Naive thymus-derived CD4-positive, alpha-beta T cell (primary cell): ENCODE measurements at regions of chr5 and their contacts with region 1.

Region 1: GRCh38 chr5:142748568-142749249 is 21.5 kb upstream of the ARHGAP26 start:
- DNase-seq: peak in 8 of 9 donors; percentile 13 to 67 (median 54)
- ATAC-seq: peak; percentile 67
- H3K4me3 ChIP-seq: no peak overlapping the region
- H3K4me3 Mint-ChIP-seq: no peak overlapping the region
- H3K27ac ChIP-seq: no peak overlapping the region
- H3K27ac Mint-ChIP-seq: no peak overlapping the region
- H3K4me1 ChIP-seq: no peaks in the 10 kb centered on the region
- H3K4me1 Mint-ChIP-seq: peaks cover 0 to 17% (median 0%) of the 10 kb centered on the region in 7 donors
- H3K27me3 ChIP-seq: no peaks in the 10 kb centered on the region
- H3K27me3 Mint-ChIP-seq: peaks cover 0 to 14% (median 0%) of the 10 kb centered on the region in 5 donors

Region 2: DNA sequence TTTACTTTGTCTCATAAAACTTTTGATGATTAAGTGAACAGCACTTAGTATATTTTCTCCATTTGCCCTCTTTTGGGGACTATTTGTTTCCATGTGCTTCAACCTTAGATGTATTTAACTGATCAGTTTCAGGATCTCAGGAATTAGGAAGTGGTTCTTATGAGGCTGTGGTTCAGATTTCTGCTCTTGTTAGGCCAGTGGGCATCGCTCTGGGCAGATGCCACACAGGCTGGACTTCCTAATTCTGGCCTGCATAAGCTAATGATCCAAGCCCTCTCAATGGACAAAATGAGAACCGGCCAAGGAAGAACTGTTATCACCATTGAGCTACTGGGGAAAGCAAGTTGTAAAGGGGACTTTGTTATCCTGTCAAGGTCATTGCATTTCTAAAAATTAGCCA is 28.4 kb after region 1 on chr5:
- CTCF ChIA-PET with region 1: no interaction called
- POLR2A ChIA-PET with region 1: no interaction called
- intact Hi-C with region 1: no loop called
- DNase-seq: no peak
- ATAC-seq: peak; percentile 45
- H3K4me3 ChIP-seq: no peak overlapping the region
- H3K4me3 Mint-ChIP-seq: peak overlapping the region in 1 of 10 donors; percentile 18
- H3K27ac ChIP-seq: no peak overlapping the region
- H3K27ac Mint-ChIP-seq: no peak overlapping the region
- H3K4me1 ChIP-seq: peaks cover 15 to 38% of the 10 kb centered on the region in 2 donors
- H3K4me1 Mint-ChIP-seq: peaks cover 37 to 75% (median 70%) of the 10 kb centered on the region in 7 donors
- H3K27me3 ChIP-seq: no peaks in the 10 kb centered on the region
- H3K27me3 Mint-ChIP-seq: no peaks in the 10 kb centered on the region

Region 3: GRCh38 chr5:142864725-142865260 is 116.1 kb after region 1 on chr5:
- CTCF ChIA-PET with region 1: interaction called, 28 read pairs
- POLR2A ChIA-PET with region 1: interaction called, 4 read pairs
- intact Hi-C with region 1: loop called (anchors 1 kb)
- DNase-seq: no peak
- ATAC-seq: no peak
- H3K4me3 ChIP-seq: no peak overlapping the region
- H3K4me3 Mint-ChIP-seq: peak overlapping the region in 3 of 10 donors; percentile 9 to 62 (median 42)
- H3K27ac ChIP-seq: no peak overlapping the region
- H3K27ac Mint-ChIP-seq: peak overlapping the region in 6 of 9 donors; percentile 51 to 87 (median 82)
- H3K4me1 ChIP-seq: peaks cover 0 to 12% of the 10 kb centered on the region in 2 donors
- H3K4me1 Mint-ChIP-seq: peaks cover 29 to 59% (median 55%) of the 10 kb centered on the region in 7 donors
- H3K27me3 ChIP-seq: no peaks in the 10 kb centered on the region
- H3K27me3 Mint-ChIP-seq: no peaks in the 10 kb centered on the region

Region 4: DNA sequence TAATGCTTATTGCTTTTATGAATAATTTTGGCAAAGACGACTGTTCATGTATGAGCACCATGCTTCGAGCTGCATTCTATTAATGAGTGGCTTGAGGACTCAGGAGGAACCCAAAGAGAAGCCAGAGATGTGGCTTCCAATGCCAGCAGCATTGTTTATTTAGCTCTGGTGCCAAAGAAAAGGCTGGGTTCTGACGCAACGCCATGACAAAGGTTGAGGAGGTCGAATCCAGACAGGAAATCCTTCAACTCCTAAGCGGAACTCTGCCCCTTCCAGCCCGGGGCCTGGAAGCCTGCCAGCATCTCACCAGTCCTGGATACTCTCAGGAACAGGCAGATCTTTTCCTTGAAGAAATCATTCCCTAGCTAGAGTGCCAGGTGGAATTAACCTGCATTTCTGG is 125.8 kb after region 1 on chr5:
- CTCF ChIA-PET with region 1: interaction called, 178 read pairs
- POLR2A ChIA-PET with region 1: no interaction called
- intact Hi-C with region 1: no loop called
- DNase-seq: no peak
- ATAC-seq: no peak
- H3K4me3 ChIP-seq: no peak overlapping the region
- H3K4me3 Mint-ChIP-seq: no peak overlapping the region
- H3K27ac ChIP-seq: no peak overlapping the region
- H3K27ac Mint-ChIP-seq: no peak overlapping the region
- H3K4me1 ChIP-seq: no peaks in the 10 kb centered on the region
- H3K4me1 Mint-ChIP-seq: peaks cover 2 to 12% (median 4%) of the 10 kb centered on the region in 7 donors
- H3K27me3 ChIP-seq: no peaks in the 10 kb centered on the region
- H3K27me3 Mint-ChIP-seq: no peaks in the 10 kb centered on the region

Region 5: GRCh38 chr5:142881076-142881783 is 132.5 kb after region 1 on chr5:
- CTCF ChIA-PET with region 1: interaction called, 178 read pairs
- POLR2A ChIA-PET with region 1: no interaction called
- intact Hi-C with region 1: loop called (anchors 1 kb)
- DNase-seq: no peak
- ATAC-seq: peak; percentile 84
- H3K4me3 ChIP-seq: no peak overlapping the region
- H3K4me3 Mint-ChIP-seq: no peak overlapping the region
- H3K27ac ChIP-seq: no peak overlapping the region
- H3K27ac Mint-ChIP-seq: no peak overlapping the region
- H3K4me1 ChIP-seq: peaks cover 0 to 3% of the 10 kb centered on the region in 2 donors
- H3K4me1 Mint-ChIP-seq: peaks cover 0 to 11% (median 5%) of the 10 kb centered on the region in 7 donors
- H3K27me3 ChIP-seq: no peaks in the 10 kb centered on the region
- H3K27me3 Mint-ChIP-seq: no peaks in the 10 kb centered on the region

Region 6: DNA sequence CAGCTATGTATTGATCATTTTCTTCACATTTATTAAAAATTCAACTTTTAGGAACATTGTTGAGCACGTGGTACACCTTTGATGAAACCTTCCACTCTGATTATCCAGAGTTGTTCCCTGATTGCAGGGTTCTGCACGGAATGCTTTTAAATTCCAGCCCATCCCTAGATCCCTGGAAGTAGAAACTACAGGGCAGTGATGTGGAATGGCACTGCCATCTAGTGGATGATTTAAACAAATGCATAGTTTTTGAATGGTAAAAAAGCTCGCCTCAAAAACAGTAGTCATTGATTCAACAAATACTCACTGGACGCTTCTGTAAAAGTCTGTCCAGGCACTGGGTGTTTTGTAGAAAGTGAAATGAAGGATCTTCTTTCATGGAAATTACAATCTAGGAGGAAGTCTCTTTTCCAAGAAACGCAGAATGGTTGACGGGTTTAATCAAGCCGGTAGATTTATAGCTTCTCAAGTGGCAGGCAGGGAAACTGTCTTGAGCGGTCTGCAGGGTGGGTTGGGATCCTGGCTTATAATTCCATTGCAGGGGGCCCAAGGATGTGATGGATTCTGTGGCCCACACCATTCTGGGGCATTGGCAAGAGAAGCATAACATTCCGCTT is 139.9 kb after region 1 on chr5:
- CTCF ChIA-PET with region 1: interaction called, 178 read pairs
- POLR2A ChIA-PET with region 1: interaction called, 4 read pairs
- intact Hi-C with region 1: loop called in 1 of 2 experiments (anchors 1 kb)
- DNase-seq: peak in 4 of 9 donors; percentile 19 to 27 (median 24)
- ATAC-seq: peak; percentile 45
- H3K4me3 ChIP-seq: no peak overlapping the region
- H3K4me3 Mint-ChIP-seq: no peak overlapping the region
- H3K27ac ChIP-seq: no peak overlapping the region
- H3K27ac Mint-ChIP-seq: no peak overlapping the region
- H3K4me1 ChIP-seq: peaks cover 0 to 8% of the 10 kb centered on the region in 2 donors
- H3K4me1 Mint-ChIP-seq: peaks cover 0 to 16% (median 5%) of the 10 kb centered on the region in 7 donors
- H3K27me3 ChIP-seq: no peaks in the 10 kb centered on the region
- H3K27me3 Mint-ChIP-seq: no peaks in the 10 kb centered on the region

Region 7: DNA sequence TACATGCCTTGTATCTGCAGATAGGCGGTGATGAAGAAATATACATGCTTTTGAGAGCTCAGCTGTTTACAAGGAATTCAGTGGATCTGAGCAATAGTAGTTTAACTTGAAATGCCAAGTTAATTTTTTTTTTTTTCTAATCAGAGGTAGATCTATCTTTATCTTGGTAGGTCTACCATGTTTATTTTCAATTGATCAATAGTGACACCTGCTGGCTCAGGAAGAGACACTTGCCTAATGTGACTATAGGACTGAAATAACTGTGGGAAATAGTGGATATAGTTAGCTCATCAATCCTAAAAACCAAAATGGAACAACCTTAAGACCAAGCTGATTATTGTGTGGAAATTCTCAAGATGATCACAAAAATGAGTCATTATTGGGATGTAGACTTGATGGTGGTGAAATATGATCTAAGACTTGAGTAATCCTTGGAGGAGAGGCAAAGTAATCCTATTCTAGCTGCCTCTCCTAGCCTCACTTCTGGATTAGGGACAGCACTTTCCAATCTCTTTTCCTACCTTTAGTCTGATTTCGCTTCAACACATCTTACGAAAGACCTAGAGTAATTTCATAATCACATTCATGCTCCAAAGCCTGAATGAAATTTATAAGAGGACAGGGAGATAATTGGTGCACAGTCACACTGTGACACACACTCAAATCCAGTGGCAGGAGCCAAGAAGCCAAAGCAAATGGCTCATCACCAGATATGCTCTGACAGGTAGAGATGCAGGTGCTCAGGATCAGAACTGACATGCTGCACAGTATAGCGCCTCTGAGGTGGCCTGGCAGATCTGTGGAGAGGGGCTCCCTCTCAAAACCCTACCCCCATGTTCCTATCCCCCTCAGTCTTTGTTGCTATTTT is 1219.5 kb after region 1 on chr5:
- CTCF ChIA-PET with region 1: no interaction called
- POLR2A ChIA-PET with region 1: no interaction called
- intact Hi-C with region 1: loop called in 1 of 2 experiments (anchors 2 kb)
- DNase-seq: peak in 6 of 9 donors; percentile 13 to 43 (median 27)
- ATAC-seq: no peak
- H3K4me3 ChIP-seq: no peak overlapping the region
- H3K4me3 Mint-ChIP-seq: no peak overlapping the region
- H3K27ac ChIP-seq: no peak overlapping the region
- H3K27ac Mint-ChIP-seq: no peak overlapping the region
- H3K4me1 ChIP-seq: no peaks in the 10 kb centered on the region
- H3K4me1 Mint-ChIP-seq: peaks cover 0 to 6% (median 0%) of the 10 kb centered on the region in 7 donors
- H3K27me3 ChIP-seq: no peaks in the 10 kb centered on the region
- H3K27me3 Mint-ChIP-seq: peaks cover 6 to 27% (median 22%) of the 10 kb centered on the region in 5 donors